ENCODE measurements at regions of chr20 and their contacts with region 1.

Region 1: GRCh38 chr20:12925214-12925755 is 83.5 kb upstream of the SPTLC3 start:
- DNase-seq: peak in 3 of 5 donors; percentile 2 to 42 (median 11)
- H3K4me3 ChIP-seq: no peak overlapping the region
- H3K4me3 Mint-ChIP-seq: no peak overlapping the region
- H3K27ac ChIP-seq: no peak overlapping the region
- H3K27ac Mint-ChIP-seq: no peak overlapping the region
- H3K4me1 ChIP-seq: no peaks in the 10 kb centered on the region
- H3K4me1 Mint-ChIP-seq: peaks cover 0 to 3% (median 0%) of the 10 kb centered on the region in 4 donors
- H3K27me3 ChIP-seq: no peaks in the 10 kb centered on the region
- H3K27me3 Mint-ChIP-seq: peaks cover 0 to 2% of the 10 kb centered on the region in 2 donors

Region 2: GRCh38 chr20:13105864-13106457 is 180.7 kb after region 1 on chr20:
- CTCF ChIA-PET with region 1: interaction called, 3 read pairs
- POLR2A ChIA-PET with region 1: no interaction called
- intact Hi-C with region 1: loop called (anchors 5 kb)
- DNase-seq: peak in 3 of 5 donors; percentile 10 to 20 (median 14)
- H3K4me3 ChIP-seq: no peak overlapping the region
- H3K4me3 Mint-ChIP-seq: no peak overlapping the region
- H3K27ac ChIP-seq: no peak overlapping the region
- H3K27ac Mint-ChIP-seq: no peak overlapping the region
- H3K4me1 ChIP-seq: no peaks in the 10 kb centered on the region
- H3K4me1 Mint-ChIP-seq: no peaks in the 10 kb centered on the region
- H3K27me3 ChIP-seq: no peaks in the 10 kb centered on the region
- H3K27me3 Mint-ChIP-seq: peaks cover 2 to 8% of the 10 kb centered on the region in 2 donors

Measured in CD4-positive, alpha-beta memory T cell (primary cell).